Activated naive CD4-positive, alpha-beta T cell treated with anti-CD3 and anti-CD28 coated beads for 36 hours (primary cell): ENCODE measurements at regions of chr9 and their contacts with region 1.

Region 1: DNA sequence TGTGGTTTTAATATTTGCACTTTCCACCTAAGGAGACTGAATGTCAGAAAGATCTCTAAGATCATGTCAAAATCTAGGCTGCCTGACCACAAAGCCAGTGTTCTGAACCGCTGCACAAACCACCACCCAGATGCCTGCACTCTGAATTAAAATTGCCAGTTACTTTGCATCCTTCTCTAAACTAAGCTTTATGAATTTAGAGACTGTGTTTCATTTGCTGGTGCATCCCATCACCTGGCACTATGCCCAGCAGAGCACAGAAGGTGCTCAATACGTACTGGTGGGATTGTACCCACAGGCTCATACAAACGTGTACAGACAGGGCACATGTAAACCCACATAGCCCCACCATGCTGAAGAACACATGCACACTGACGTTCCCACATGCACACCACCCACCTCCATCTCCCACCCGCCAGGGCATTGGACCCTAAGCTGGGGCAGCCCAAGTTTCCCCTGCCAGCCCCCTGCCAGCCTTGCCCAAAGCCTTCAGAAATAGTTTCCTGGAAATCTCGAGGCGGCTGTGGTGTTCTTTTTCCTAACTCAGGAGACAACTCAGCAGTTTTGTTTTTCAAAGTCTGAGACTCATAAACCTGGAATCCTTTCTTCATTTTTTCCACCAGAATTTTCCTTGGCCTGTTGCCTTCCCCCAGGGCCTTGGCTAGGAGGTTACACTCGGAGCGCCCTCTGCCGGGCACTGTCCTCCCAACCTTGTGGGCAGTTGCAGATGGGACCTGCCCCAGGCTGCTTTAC is 9.6 kb upstream of the TRAF1 start:
- DNase-seq: peak; percentile 97
- H3K4me3 Mint-ChIP-seq: peak overlapping the region; percentile 49
- H3K27ac Mint-ChIP-seq: peak overlapping the region; percentile 99
- H3K4me1 Mint-ChIP-seq: peaks cover 61% of the 10 kb centered on the region
- H3K27me3 Mint-ChIP-seq: no peaks in the 10 kb centered on the region

Region 2: GRCh38 chr9:120562861-120563443 is 373.2 kb before region 1 on chr9:
- CTCF ChIA-PET with region 1: no interaction called
- intact Hi-C with region 1: no loop called
- DNase-seq: no peak
- H3K4me3 Mint-ChIP-seq: no peak overlapping the region
- H3K27ac Mint-ChIP-seq: no peak overlapping the region
- H3K4me1 Mint-ChIP-seq: peaks cover 16% of the 10 kb centered on the region
- H3K27me3 Mint-ChIP-seq: no peaks in the 10 kb centered on the region

Region 3: GRCh38 chr9:120619751-120620655 is 316.2 kb before region 1 on chr9:
- CTCF ChIA-PET with region 1: no interaction called
- intact Hi-C with region 1: loop called (anchors 5 kb)
- DNase-seq: peak; percentile 82
- H3K4me3 Mint-ChIP-seq: no peak overlapping the region
- H3K27ac Mint-ChIP-seq: no peak overlapping the region
- H3K4me1 Mint-ChIP-seq: peaks cover 3% of the 10 kb centered on the region
- H3K27me3 Mint-ChIP-seq: no peaks in the 10 kb centered on the region

Region 4: DNA sequence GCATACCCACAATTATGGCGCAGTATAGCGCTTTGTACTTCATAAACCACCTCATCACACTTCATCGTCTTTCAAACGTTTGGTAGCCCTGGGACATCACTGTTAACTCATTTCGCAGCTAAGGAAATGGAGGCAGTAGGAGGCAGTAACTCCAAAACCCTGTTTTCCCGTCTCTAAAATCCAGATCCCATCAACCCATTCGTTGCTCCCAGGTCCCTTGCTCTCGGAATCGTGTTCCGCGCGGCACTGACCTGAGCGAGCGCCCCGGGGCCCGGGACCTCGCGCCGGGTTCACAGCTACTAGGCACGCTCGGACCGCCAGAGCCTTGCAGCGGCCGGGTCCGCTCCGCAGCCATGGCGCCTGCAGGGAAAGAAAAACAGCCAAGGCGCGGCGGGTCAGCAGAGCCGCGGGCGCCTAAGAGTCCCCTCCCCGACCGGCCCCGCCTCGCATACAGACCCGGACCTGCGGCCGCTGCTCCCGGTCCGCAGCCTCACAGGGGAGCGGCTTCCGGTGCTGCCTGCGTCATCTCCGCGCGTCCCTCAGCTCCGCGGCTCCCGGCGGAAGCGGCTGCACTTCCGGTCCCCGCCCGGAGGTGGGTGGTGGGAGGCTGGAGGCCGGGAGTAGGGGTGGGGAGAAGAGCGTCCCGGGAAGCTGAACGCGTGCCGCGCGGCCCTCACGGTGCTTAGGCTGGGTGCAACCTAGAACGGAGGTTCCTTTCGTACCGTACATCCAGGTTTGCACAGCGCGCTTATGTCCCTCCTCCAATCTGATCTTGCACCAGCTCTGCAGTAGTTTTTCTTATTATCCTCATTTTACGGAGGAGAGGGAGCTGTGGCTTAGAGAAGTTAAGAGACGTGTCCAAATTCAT is 143.1 kb before region 1 on chr9 and contains the start of gene FBXW2:
- CTCF ChIA-PET with region 1: interaction called, 3 read pairs
- intact Hi-C with region 1: loop called (anchors 1 kb)
- DNase-seq: peak; percentile 92
- H3K4me3 Mint-ChIP-seq: peak within 1 kb of the TSS; percentile 88
- H3K27ac Mint-ChIP-seq: peak within 1 kb of the TSS; percentile 92
- H3K4me1 Mint-ChIP-seq: peaks cover 46% of the 10 kb centered on the region
- H3K27me3 Mint-ChIP-seq: no peaks in the 10 kb centered on the region
- total RNA-seq, gene FBXW2: 60.8 to 64.4 TPM

Region 5: DNA sequence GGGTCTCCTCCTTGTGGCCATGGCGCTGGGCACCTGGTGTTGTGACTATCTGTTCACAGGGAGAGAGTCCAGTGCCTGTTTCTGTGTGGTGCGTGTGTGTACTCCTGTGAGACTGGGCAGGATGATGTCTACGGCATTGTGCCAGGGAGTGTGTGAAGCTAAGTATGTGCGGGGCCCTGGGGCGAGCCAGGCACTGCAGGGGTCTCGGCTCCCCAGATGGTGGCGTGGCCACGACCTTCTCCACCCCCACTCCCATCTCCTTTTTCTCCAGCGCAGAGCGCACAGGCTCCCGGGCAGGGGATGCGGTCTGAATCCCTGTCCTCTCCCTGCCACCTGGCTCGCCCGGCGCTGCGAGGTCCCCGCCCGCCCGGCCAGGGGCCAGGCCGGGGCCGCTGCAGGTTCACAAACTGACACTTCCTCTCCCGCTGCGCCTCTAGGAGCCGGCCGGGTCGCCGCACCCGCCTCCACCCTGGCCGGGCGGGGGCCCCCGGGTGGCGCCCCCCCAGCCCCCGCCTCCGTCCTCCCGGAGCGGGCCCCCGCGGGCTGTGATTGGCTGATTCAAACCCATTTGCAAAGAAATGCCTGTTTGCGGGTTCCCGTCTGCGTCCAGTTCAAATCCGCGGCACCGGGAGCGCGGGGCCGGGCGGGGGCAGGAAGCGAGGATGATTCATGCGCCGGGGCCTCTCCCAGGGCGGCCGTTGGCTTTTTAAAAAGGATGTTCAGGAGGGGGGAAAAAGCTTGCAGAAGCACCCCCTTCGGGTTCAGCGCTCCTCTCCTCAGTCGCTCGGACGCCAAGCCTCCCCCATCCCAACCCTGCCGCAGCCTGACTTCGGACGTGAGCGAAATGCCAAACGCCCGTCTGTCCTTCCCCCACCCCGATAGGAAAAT is 60.0 kb before region 1 on chr9:
- CTCF ChIA-PET with region 1: interaction called, 5 read pairs
- intact Hi-C with region 1: loop called (anchors 1 kb)
- DNase-seq: peak; percentile 98
- H3K4me3 Mint-ChIP-seq: peak overlapping the region; percentile 85
- H3K27ac Mint-ChIP-seq: peak overlapping the region; percentile 98
- H3K4me1 Mint-ChIP-seq: peaks cover 75% of the 10 kb centered on the region
- H3K27me3 Mint-ChIP-seq: no peaks in the 10 kb centered on the region

Region 6: GRCh38 chr9:120904061-120904977 is 31.9 kb before region 1 on chr9:
- CTCF ChIA-PET with region 1: interaction called, 14 read pairs
- intact Hi-C with region 1: no loop called
- DNase-seq: peak; percentile 83
- H3K4me3 Mint-ChIP-seq: no peak overlapping the region
- H3K27ac Mint-ChIP-seq: peak overlapping the region; percentile 94
- H3K4me1 Mint-ChIP-seq: peaks cover 88% of the 10 kb centered on the region
- H3K27me3 Mint-ChIP-seq: no peaks in the 10 kb centered on the region

Region 7: DNA sequence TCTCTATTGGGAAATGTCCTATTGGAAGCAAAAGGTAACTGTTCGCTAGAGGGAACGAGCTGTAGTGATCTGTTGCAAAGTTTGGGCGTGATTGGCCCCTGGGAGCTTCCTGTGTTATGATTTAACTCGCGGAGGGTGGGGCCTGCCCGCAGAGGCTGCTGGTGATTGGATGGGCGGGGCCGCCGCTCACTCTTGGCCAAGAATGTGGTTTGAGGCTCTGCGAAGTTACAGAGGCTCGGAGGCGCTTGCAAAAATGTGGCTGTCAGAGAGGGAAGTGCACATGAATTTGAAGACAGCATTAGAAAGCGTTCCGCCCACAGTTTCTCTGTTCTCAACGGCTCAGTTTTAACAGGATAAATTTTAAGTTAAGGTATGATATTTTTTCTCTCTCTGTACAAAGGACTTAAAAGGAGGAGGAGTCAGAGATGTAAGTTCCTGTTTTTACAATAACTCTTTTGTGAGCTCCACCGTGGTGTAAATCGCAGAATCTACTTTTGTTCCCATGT is 185.4 kb after region 1 on chr9:
- CTCF ChIA-PET with region 1: no interaction called
- intact Hi-C with region 1: loop called (anchors 1 kb)
- DNase-seq: peak; percentile 99
- H3K4me3 Mint-ChIP-seq: peak overlapping the region; percentile 73
- H3K27ac Mint-ChIP-seq: peak overlapping the region; percentile 91
- H3K4me1 Mint-ChIP-seq: peaks cover 44% of the 10 kb centered on the region
- H3K27me3 Mint-ChIP-seq: no peaks in the 10 kb centered on the region